Activated CD8-positive, alpha-beta T cell treated with anti-CD3 and anti-CD28 coated beads, Interleukin-2, amount 10 ng/mL, durations not matched to agents 7 days and 5 days (primary cell): ENCODE measurements at regions of chr19 and their contacts with region 1.

Region 1: DNA sequence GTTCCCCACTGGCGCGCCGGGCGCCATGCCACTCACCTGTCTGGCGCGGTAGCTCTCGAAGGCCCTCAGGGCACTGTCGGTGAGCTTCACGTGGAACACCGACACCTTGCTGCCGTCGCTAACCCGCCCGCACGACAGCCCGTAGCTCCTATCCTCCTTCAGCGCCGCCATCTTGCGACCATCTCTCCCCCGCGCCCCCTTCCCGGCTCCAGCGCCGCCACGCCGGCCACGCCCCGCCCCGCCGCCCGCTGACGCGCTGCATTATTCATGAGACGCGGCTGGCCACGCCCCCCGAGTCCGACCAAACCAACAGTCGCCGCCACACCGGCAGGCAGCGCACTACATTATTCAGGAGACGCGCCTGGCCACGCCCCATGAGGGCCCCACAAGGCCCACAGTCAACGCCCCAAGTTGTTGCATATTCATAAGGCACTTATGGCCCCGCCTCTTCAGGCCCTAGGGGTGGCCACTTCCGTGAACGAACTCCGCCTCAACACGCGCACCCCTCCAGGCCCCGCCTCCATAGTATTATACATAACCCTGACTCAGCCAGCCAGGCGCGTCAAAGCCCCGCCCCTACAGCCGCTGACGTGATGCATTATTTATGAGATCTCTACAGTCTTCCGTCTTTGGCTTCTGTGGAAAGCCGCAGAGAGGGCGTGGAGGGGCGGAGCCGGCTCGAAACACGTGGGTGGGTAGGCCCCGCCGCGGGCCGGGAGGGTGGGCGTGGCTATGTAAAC is at the start of gene ELL:
- DNase-seq: peak; percentile 100
- ATAC-seq: peak; percentile 91
- H3K4me3 Mint-ChIP-seq: peak within 1 kb of the TSS; percentile 79
- H3K27ac Mint-ChIP-seq: peak within 1 kb of the TSS; percentile 95
- H3K4me1 Mint-ChIP-seq: peaks cover 11% of the 10 kb centered on the region
- H3K27me3 Mint-ChIP-seq: no peaks in the 10 kb centered on the region
- total RNA-seq, gene ELL: 20.8 to 22.3 TPM

Region 2: DNA sequence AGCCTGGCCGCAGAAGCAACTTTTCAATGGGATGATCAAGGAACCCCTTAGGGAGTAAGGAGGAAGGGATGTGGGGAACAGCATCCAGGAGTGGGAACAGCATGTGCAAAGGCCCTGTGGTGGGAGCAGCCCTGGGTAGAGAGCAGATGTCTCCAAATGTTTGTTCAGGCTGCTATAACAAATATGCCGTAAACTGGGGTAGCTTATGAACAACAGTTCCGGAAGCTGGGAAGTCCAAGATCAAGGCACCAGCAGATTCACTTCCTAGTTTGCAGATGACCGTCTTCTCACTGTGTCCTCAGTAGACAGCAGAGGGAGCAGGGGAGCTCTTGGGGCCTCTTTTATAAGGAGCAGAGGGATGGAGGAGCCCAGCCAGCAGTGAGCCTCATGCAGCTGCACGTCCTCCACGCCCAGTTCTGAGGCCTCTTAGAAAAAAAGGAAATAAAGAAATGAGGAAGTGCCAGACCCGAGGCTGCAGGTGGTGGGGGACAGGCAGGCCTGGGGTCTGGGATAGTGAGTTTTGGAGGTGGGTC is 120.4 kb before region 1 on chr19:
- CTCF ChIA-PET with region 1: no interaction called
- POLR2A ChIA-PET with region 1: no interaction called
- DNase-seq: no peak
- ATAC-seq: no peak
- H3K4me3 Mint-ChIP-seq: no peak overlapping the region
- H3K27ac Mint-ChIP-seq: peak overlapping the region; percentile 73
- H3K4me1 Mint-ChIP-seq: peaks cover 26% of the 10 kb centered on the region
- H3K27me3 Mint-ChIP-seq: peaks cover 11% of the 10 kb centered on the region

Region 3: DNA sequence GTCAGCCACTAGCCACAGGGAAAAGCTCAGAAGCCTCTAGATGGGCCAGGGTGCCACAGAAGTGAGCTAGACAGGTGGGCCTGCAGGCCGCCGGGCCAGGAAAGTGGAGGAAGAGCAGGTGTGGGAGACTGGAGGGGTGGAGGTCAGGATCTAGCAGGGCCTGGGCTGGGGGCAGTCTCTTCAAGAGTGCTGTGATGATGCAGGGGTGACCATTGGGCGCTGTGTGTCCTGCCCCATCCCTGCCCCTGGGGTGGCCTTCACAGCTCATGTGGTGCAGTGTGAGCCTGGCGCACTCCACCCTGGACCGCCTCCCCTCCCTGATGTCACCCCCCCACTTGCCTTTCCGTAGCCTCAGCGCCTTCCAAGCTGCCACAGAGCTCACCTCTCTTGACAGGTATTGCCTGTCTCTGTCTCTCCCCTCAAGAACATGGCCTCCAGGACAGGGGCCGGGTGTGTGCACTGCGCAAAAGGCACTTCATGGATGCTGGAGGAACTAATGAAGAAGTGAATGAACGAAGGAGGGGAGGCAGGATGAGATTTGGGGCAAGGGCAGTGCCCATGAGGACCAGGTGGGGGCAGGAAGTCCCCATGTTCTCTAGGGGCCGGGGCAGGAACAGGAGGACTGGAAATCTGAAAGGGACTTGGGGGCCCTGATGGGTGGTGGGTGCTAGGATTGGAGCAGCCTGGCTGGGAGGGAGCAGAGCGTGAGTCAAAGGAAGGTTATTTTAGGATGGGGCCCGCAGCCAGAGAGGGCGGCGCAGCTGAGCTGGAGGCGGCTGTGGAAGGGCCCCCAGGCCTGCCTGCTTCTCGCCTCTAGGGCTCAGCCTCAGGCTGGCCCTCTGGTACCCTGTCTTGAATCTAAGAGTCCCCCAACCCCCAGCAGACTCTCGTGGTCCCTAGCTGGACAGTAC is 96.3 kb before region 1 on chr19:
- CTCF ChIA-PET with region 1: no interaction called
- POLR2A ChIA-PET with region 1: no interaction called
- DNase-seq: no peak
- ATAC-seq: no peak
- H3K4me3 Mint-ChIP-seq: no peak overlapping the region
- H3K27ac Mint-ChIP-seq: peak overlapping the region; percentile 54
- H3K4me1 Mint-ChIP-seq: peaks cover 86% of the 10 kb centered on the region
- H3K27me3 Mint-ChIP-seq: no peaks in the 10 kb centered on the region

Region 4: GRCh38 chr19:18450931-18451845 is 70.9 kb before region 1 on chr19:
- CTCF ChIA-PET with region 1: interaction called, 15 read pairs
- POLR2A ChIA-PET with region 1: no interaction called
- DNase-seq: peak; percentile 92
- ATAC-seq: peak; percentile 87
- H3K4me3 Mint-ChIP-seq: no peak overlapping the region
- H3K27ac Mint-ChIP-seq: no peak overlapping the region
- H3K4me1 Mint-ChIP-seq: peaks cover 2% of the 10 kb centered on the region
- H3K27me3 Mint-ChIP-seq: no peaks in the 10 kb centered on the region

Region 5: DNA sequence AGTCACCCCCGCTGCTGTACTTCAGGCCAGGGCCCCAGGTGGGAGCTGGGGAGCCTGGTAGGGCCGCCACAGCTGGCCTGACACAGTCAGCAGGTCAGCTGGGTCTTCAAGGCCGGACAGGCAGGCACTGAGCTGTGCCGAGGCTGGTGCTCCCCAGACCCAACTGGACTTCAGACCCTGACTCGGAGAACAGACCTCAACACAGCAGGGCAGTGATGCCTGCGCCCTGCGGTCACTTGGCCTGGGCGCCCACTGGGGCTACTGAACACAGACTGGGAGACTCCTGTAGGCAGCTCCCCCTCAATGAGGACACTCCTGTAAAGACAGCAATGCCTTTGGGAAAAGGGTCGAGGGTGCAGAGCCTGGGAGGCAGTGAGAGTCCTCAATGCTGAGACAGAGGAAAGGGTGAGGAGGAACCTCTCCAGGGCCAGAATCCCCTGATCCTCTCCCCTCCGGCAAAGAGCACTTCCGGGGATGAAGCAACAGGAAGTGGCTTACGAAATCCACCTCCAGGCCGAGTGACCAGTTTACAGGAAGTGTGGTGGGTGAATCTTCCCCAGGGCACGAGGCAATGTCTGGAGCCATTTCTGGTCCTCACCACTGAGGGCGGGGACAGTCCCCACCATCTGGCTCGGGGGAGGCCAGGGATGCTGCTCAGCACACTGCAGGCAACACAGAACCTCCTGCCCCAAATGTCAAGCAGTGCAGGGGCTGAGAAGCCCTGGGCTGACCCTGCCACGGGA is 43.3 kb before region 1 on chr19:
- CTCF ChIA-PET with region 1: interaction called, 38 read pairs
- POLR2A ChIA-PET with region 1: interaction called, 4 read pairs
- DNase-seq: peak; percentile 73
- ATAC-seq: peak; percentile 67
- H3K4me3 Mint-ChIP-seq: peak overlapping the region; percentile 59
- H3K27ac Mint-ChIP-seq: peak overlapping the region; percentile 85
- H3K4me1 Mint-ChIP-seq: peaks cover 82% of the 10 kb centered on the region
- H3K27me3 Mint-ChIP-seq: no peaks in the 10 kb centered on the region

Region 6: GRCh38 chr19:18496167-18496979 is 25.7 kb before region 1 on chr19:
- CTCF ChIA-PET with region 1: interaction called, 46 read pairs
- POLR2A ChIA-PET with region 1: interaction called, 15 read pairs
- DNase-seq: peak; percentile 71
- ATAC-seq: peak; percentile 90
- H3K4me3 Mint-ChIP-seq: peak overlapping the region; percentile 63
- H3K27ac Mint-ChIP-seq: peak overlapping the region; percentile 87
- H3K4me1 Mint-ChIP-seq: peaks cover 81% of the 10 kb centered on the region
- H3K27me3 Mint-ChIP-seq: no peaks in the 10 kb centered on the region

Region 7: GRCh38 chr19:18542936-18543815 is 21.1 kb after region 1 on chr19 and contains the start of gene FKBP8:
- CTCF ChIA-PET with region 1: interaction called, 18 read pairs
- POLR2A ChIA-PET with region 1: interaction called, 10 read pairs
- DNase-seq: peak; percentile 97
- ATAC-seq: peak; percentile 98
- H3K4me3 Mint-ChIP-seq: peak within 1 kb of the TSS; percentile 93
- H3K27ac Mint-ChIP-seq: peak within 1 kb of the TSS; percentile 99
- H3K4me1 Mint-ChIP-seq: peaks cover 30% of the 10 kb centered on the region
- H3K27me3 Mint-ChIP-seq: no peaks in the 10 kb centered on the region
- total RNA-seq, gene FKBP8: 245 to 247 TPM

Region 8: GRCh38 chr19:18571564-18572300 is 49.7 kb after region 1 on chr19 and contains the start of gene UBA52:
- CTCF ChIA-PET with region 1: interaction called, 36 read pairs
- POLR2A ChIA-PET with region 1: interaction called, 28 read pairs
- DNase-seq: peak; percentile 99
- ATAC-seq: peak; percentile 92
- H3K4me3 Mint-ChIP-seq: peak within 1 kb of the TSS; percentile 80
- H3K27ac Mint-ChIP-seq: peak within 1 kb of the TSS; percentile 89
- H3K4me1 Mint-ChIP-seq: peaks cover 31% of the 10 kb centered on the region
- H3K27me3 Mint-ChIP-seq: no peaks in the 10 kb centered on the region
- total RNA-seq, gene UBA52: 1,452 to 1,556 TPM

Region 9: GRCh38 chr19:18594096-18594823 is 72.2 kb after region 1 on chr19:
- CTCF ChIA-PET with region 1: interaction called, 51 read pairs
- POLR2A ChIA-PET with region 1: interaction called, 25 read pairs
- DNase-seq: peak; percentile 75
- ATAC-seq: peak; percentile 59
- H3K4me3 Mint-ChIP-seq: peak overlapping the region; percentile 64
- H3K27ac Mint-ChIP-seq: no peak overlapping the region
- H3K4me1 Mint-ChIP-seq: peaks cover 29% of the 10 kb centered on the region
- H3K27me3 Mint-ChIP-seq: peaks cover 2% of the 10 kb centered on the region

Region 10: DNA sequence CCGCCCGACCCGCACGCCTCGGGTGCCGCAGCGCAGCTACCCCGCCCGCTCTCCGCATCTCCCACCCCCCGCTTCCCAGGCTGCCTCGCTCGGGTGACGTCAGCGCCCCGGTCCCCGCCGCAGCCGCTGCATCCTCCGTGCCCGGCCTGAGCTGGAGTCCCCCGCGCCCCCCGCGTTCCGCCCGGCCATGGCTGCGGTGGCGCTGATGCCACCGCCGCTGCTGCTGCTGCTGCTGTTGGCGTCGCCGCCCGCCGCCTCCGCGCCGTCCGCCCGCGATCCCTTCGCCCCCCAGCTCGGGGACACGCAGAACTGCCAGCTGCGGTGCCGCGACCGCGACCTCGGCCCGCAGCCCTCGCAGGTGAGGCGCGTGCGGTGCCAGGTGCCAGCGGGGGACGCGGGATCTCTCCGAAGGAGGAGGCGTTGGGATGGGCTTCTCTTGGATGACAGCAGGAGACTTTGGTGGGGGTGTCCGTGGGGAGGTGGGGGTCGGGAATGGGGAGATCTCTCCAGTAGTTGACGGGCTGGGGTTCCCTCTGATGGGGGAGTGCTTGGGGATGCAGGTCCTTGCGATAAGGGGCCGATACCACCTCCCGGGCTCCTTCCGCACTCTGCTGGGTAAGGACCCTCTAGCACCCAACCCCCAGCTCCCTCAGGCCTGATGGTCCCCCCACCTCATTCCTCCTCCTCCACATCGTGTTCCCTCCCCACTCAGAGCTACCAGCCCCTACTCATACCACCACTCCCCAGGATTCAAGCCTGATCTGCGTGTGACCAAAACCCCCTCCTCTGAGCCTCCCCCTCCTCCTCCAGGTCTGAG is 90.9 kb after region 1 on chr19 and contains the start of gene TMEM59L:
- CTCF ChIA-PET with region 1: no interaction called
- POLR2A ChIA-PET with region 1: no interaction called
- DNase-seq: peak; percentile 39
- ATAC-seq: no peak
- H3K4me3 Mint-ChIP-seq: peak within 1 kb of the TSS; percentile 15
- H3K27ac Mint-ChIP-seq: no peak within 1 kb of the TSS
- H3K4me1 Mint-ChIP-seq: peaks cover 14% of the 10 kb centered on the region
- H3K27me3 Mint-ChIP-seq: peaks cover 66% of the 10 kb centered on the region
- total RNA-seq, gene TMEM59L: not detected

Region 11: GRCh38 chr19:18733196-18733647 is 211.2 kb after region 1 on chr19:
- CTCF ChIA-PET with region 1: no interaction called
- POLR2A ChIA-PET with region 1: no interaction called
- DNase-seq: no peak
- ATAC-seq: no peak
- H3K4me3 Mint-ChIP-seq: no peak overlapping the region
- H3K27ac Mint-ChIP-seq: no peak overlapping the region
- H3K4me1 Mint-ChIP-seq: no peaks in the 10 kb centered on the region
- H3K27me3 Mint-ChIP-seq: no peaks in the 10 kb centered on the region